Activated naive CD4-positive, alpha-beta T cell treated with anti-CD3 and anti-CD28 coated beads, Interleukin-2, amount 10 ng/mL, durations not matched to agents 7 days and 5 days (primary cell): ENCODE measurements at regions of chr17 and their contacts with region 1.

Region 1: GRCh38 chr17:27236717-27237315 is 57.1 kb upstream of the WSB1 start:
- DNase-seq: peak; percentile 84
- H3K4me3 Mint-ChIP-seq: no peak overlapping the region
- H3K27ac Mint-ChIP-seq: no peak overlapping the region
- H3K4me1 Mint-ChIP-seq: peaks cover 11% of the 10 kb centered on the region
- H3K27me3 Mint-ChIP-seq: peaks cover 42% of the 10 kb centered on the region

Region 2: GRCh38 chr17:27269201-27269600 is 32.4 kb after region 1 on chr17:
- CTCF ChIA-PET with region 1: no interaction called
- DNase-seq: no peak
- H3K4me3 Mint-ChIP-seq: no peak overlapping the region
- H3K27ac Mint-ChIP-seq: no peak overlapping the region
- H3K4me1 Mint-ChIP-seq: no peaks in the 10 kb centered on the region
- H3K27me3 Mint-ChIP-seq: peaks cover 22% of the 10 kb centered on the region

Region 3: GRCh38 chr17:27293898-27294688 is 57.3 kb after region 1 on chr17 and contains the start of gene WSB1:
- CTCF ChIA-PET with region 1: interaction called, 14 read pairs
- DNase-seq: peak; percentile 93
- H3K4me3 Mint-ChIP-seq: peak within 1 kb of the TSS; percentile 90
- H3K27ac Mint-ChIP-seq: peak within 1 kb of the TSS; percentile 96
- H3K4me1 Mint-ChIP-seq: peaks cover 38% of the 10 kb centered on the region
- H3K27me3 Mint-ChIP-seq: no peaks in the 10 kb centered on the region

Region 4: GRCh38 chr17:27332485-27333409 is 95.9 kb after region 1 on chr17:
- CTCF ChIA-PET with region 1: interaction called, 110 read pairs
- DNase-seq: peak; percentile 92
- H3K4me3 Mint-ChIP-seq: peak overlapping the region; percentile 67
- H3K27ac Mint-ChIP-seq: peak overlapping the region; percentile 81
- H3K4me1 Mint-ChIP-seq: peaks cover 25% of the 10 kb centered on the region
- H3K27me3 Mint-ChIP-seq: peaks cover 9% of the 10 kb centered on the region

Region 5: DNA sequence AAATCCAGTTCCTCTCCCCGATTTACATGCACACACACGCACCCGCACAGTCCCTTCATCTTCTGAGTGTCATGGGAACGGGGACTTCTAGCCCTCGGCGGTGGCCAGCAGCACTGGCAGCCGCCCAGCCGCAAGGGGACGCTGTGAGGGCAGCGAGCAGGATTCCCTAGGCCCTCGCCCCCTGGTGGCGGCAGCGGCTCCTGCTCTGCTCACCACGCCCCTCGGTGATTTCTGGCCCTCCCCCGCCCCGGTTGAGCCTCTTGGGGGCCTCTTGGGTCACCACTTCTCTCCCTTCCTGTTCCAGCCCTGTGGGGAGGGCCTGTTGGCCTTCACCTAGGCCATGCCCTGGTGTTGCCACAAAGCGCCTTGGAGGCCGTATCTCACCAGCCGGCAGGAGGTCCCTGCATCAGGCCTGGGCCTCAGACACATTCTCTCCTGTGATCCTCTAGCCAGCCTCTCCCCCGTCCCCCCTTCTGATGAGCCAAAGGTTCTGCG is 144.2 kb after region 1 on chr17:
- CTCF ChIA-PET with region 1: interaction called, 12 read pairs
- DNase-seq: peak; percentile 85
- H3K4me3 Mint-ChIP-seq: no peak overlapping the region
- H3K27ac Mint-ChIP-seq: no peak overlapping the region
- H3K4me1 Mint-ChIP-seq: no peaks in the 10 kb centered on the region
- H3K27me3 Mint-ChIP-seq: peaks cover 65% of the 10 kb centered on the region

Region 6: GRCh38 chr17:27413792-27414191 is 177.0 kb after region 1 on chr17:
- CTCF ChIA-PET with region 1: no interaction called
- DNase-seq: no peak
- H3K4me3 Mint-ChIP-seq: no peak overlapping the region
- H3K27ac Mint-ChIP-seq: no peak overlapping the region
- H3K4me1 Mint-ChIP-seq: no peaks in the 10 kb centered on the region
- H3K27me3 Mint-ChIP-seq: peaks cover 23% of the 10 kb centered on the region